Naive thymus-derived CD4-positive, alpha-beta T cell (primary cell): ENCODE measurements at regions of chr2 and their contacts with region 1.

Region 1: GRCh38 chr2:47888581-47889280 is 17.6 kb downstream of the FBXO11 start:
- DNase-seq: peak in 7 of 9 donors; percentile 40 to 74 (median 65)
- ATAC-seq: peak; percentile 97
- H3K4me3 ChIP-seq: no peak overlapping the region
- H3K4me3 Mint-ChIP-seq: peak overlapping the region in 9 of 10 donors; percentile 20 to 78 (median 59)
- H3K27ac ChIP-seq: peak overlapping the region; percentile 42
- H3K27ac Mint-ChIP-seq: peak overlapping the region; percentile 5 to 88 (median 73)
- H3K4me1 ChIP-seq: peaks cover 15 to 29% of the 10 kb centered on the region in 2 donors
- H3K4me1 Mint-ChIP-seq: peaks cover 40 to 89% (median 72%) of the 10 kb centered on the region in 7 donors
- H3K27me3 ChIP-seq: no peaks in the 10 kb centered on the region
- H3K27me3 Mint-ChIP-seq: no peaks in the 10 kb centered on the region

Region 2: DNA sequence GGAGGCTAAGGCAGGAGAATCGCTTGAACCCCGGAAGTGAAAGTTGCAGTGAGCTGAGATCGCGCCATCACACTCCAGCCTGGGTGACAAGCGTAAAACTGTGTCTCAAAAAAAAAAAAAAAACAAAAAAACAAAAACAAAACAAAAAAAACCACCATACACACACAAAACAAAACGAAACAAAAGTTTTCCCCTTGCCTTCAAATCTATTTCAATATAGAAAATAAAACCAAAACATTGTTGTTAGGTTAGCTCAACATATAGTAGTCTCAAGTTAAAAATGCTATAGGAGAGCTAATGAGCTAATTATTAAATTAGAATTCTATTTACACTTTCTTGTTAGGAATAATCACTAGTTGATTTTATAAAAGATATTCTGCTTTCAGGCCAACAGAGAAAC is 25.8 kb before region 1 on chr2:
- CTCF ChIA-PET with region 1: no interaction called
- POLR2A ChIA-PET with region 1: no interaction called
- intact Hi-C with region 1: loop called in 1 of 2 experiments (anchors 2 kb)
- DNase-seq: no peak
- ATAC-seq: no peak
- H3K4me3 ChIP-seq: no peak overlapping the region
- H3K4me3 Mint-ChIP-seq: no peak overlapping the region
- H3K27ac ChIP-seq: no peak overlapping the region
- H3K27ac Mint-ChIP-seq: peak overlapping the region in 6 of 9 donors; percentile 1 to 61 (median 26)
- H3K4me1 ChIP-seq: peaks cover 0 to 15% of the 10 kb centered on the region in 2 donors
- H3K4me1 Mint-ChIP-seq: peaks cover 25 to 87% (median 76%) of the 10 kb centered on the region in 7 donors
- H3K27me3 ChIP-seq: no peaks in the 10 kb centered on the region
- H3K27me3 Mint-ChIP-seq: no peaks in the 10 kb centered on the region

Region 3: DNA sequence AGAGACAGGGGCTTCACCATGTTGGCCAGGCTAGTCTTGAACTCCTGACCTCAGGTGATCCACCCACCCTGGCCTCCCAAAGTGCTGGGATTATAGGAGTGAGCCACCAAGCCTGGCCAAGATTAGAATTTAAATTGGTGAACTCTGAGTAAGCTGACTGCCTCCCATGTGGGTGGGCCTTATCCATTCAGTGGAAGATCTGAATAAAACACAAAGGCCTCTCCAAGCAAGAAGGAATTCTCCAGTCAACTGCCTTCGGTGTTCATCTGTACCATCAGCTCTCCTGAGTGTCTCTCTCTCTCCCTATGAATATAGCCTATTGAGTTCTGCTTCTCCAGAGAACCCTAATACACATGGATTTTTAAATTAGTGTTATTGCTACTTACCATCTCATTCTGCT is 18.9 kb before region 1 on chr2:
- CTCF ChIA-PET with region 1: no interaction called
- POLR2A ChIA-PET with region 1: no interaction called
- intact Hi-C with region 1: loop called (anchors 2 kb)
- DNase-seq: no peak
- ATAC-seq: no peak
- H3K4me3 ChIP-seq: no peak overlapping the region
- H3K4me3 Mint-ChIP-seq: peak overlapping the region in 3 of 10 donors; percentile 2 to 44 (median 24)
- H3K27ac ChIP-seq: peak overlapping the region; percentile 46
- H3K27ac Mint-ChIP-seq: peak overlapping the region in 6 of 9 donors; percentile 20 to 84 (median 66)
- H3K4me1 ChIP-seq: peaks cover 7 to 49% of the 10 kb centered on the region in 2 donors
- H3K4me1 Mint-ChIP-seq: peaks cover 46 to 94% (median 83%) of the 10 kb centered on the region in 7 donors
- H3K27me3 ChIP-seq: no peaks in the 10 kb centered on the region
- H3K27me3 Mint-ChIP-seq: no peaks in the 10 kb centered on the region

Region 4: DNA sequence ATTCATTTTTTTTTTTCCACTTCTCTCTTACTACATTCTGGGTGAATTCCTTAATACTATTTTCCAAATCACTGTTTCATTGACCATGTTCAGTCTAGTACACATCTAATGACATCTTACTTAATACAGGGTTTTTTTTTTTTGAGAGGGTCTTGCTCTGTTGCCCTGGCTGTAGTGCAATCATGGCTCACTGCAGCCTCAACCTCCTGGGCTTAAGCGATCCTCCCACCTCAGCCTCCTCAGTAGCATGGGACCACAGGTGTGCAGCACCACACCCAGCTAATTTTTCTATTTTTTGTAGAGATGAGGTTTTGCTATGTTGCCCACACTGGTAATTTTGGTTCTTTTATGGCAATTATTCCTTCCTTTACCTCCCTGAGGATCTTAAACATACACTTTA is 11.8 kb before region 1 on chr2:
- CTCF ChIA-PET with region 1: no interaction called
- POLR2A ChIA-PET with region 1: no interaction called
- intact Hi-C with region 1: loop called in 1 of 2 experiments (anchors 1 kb)
- DNase-seq: no peak
- ATAC-seq: no peak
- H3K4me3 ChIP-seq: no peak overlapping the region
- H3K4me3 Mint-ChIP-seq: peak overlapping the region in 1 of 10 donors; percentile 8
- H3K27ac ChIP-seq: no peak overlapping the region
- H3K27ac Mint-ChIP-seq: peak overlapping the region in 7 of 9 donors; percentile 5 to 74 (median 36)
- H3K4me1 ChIP-seq: peaks cover 0 to 13% of the 10 kb centered on the region in 2 donors
- H3K4me1 Mint-ChIP-seq: peaks cover 25 to 87% (median 77%) of the 10 kb centered on the region in 7 donors
- H3K27me3 ChIP-seq: no peaks in the 10 kb centered on the region
- H3K27me3 Mint-ChIP-seq: no peaks in the 10 kb centered on the region

Region 5: GRCh38 chr2:48080534-48081316 is 192.0 kb after region 1 on chr2:
- CTCF ChIA-PET with region 1: no interaction called
- POLR2A ChIA-PET with region 1: no interaction called
- intact Hi-C with region 1: no loop called
- DNase-seq: no peak
- ATAC-seq: peak; percentile 29
- H3K4me3 ChIP-seq: no peak overlapping the region
- H3K4me3 Mint-ChIP-seq: no peak overlapping the region
- H3K27ac ChIP-seq: no peak overlapping the region
- H3K27ac Mint-ChIP-seq: no peak overlapping the region
- H3K4me1 ChIP-seq: no peaks in the 10 kb centered on the region
- H3K4me1 Mint-ChIP-seq: no peaks in the 10 kb centered on the region
- H3K27me3 ChIP-seq: no peaks in the 10 kb centered on the region
- H3K27me3 Mint-ChIP-seq: peaks cover 0 to 8% (median 5%) of the 10 kb centered on the region in 5 donors